Left cardiac atrium (tissue), 4 donors: ENCODE measurements at regions of chrX and their contacts with region 1.

Region 1: GRCh38 chrX:106397801-106398538 is 213.8 kb upstream of the RADX start:
- DNase-seq: no peak
- ATAC-seq: no peak

Region 2: GRCh38 chrX:106170318-106170717 is 227.7 kb before region 1 on chrX:
- intact Hi-C with region 1: loop called in 1 of 2 experiments (anchors 5 kb)
- DNase-seq: no peak
- ATAC-seq: no peak